Gastrocnemius medialis (tissue), 4 donors: ENCODE measurements at regions of chr2 and their contacts with region 1.

Region 1: GRCh38 chr2:237072067-237072931 is 13.4 kb upstream of the COPS8 start:
- DNase-seq: peak in 1 of 2 donors; percentile 53
- ATAC-seq: peak; percentile 60 to 71
- H3K4me3 ChIP-seq: no peak overlapping the region
- H3K27ac ChIP-seq: no peak overlapping the region
- H3K4me1 ChIP-seq: no peaks in the 10 kb centered on the region
- H3K27me3 ChIP-seq: no peaks in the 10 kb centered on the region
- CTCF ChIP-seq: peak; percentile 86 to 98 (median 91)
- POLR2A ChIP-seq: no peak

Region 2: GRCh38 chr2:235766278-235766677 is 1306.0 kb before region 1 on chr2:
- in situ Hi-C with region 1: loop called in 2 of 4 experiments (anchors 25 kb)
- intact Hi-C with region 1: loop called (anchors 10 kb)
- DNase-seq: peak; percentile 33 to 45
- ATAC-seq: peak; percentile 81 to 95
- H3K4me3 ChIP-seq: no peak overlapping the region
- H3K27ac ChIP-seq: no peak overlapping the region
- H3K4me1 ChIP-seq: no peaks in the 10 kb centered on the region
- H3K27me3 ChIP-seq: no peaks in the 10 kb centered on the region
- CTCF ChIP-seq: peak; percentile 77 to 92 (median 85)
- POLR2A ChIP-seq: no peak

Region 3: DNA sequence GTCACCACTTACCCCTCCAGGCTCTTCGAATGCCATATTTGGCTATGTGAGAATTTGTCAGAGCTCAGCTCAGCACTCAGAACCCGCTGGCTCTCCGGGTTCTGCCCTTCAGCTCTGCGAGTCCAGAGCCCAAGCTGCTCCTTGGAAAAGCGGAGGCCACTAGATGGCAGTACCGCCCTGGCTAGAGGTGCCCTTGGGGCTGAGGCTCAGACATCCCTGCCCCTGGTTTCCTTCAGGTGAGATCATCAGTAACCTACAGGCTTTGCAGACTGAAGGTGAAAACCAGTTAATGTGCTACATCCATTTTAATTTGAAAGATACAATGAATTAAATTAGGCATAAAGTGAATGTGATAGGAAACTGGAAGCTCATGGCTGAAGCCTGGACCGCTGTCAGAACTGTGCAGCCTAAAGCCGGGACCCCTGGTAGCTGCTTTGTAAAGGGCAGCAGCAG is 1292.8 kb before region 1 on chr2:
- in situ Hi-C with region 1: loop called (anchors 25 kb)
- intact Hi-C with region 1: no loop called
- DNase-seq: peak; percentile 17 to 45
- ATAC-seq: peak; percentile 47 to 66
- H3K4me3 ChIP-seq: no peak overlapping the region
- H3K27ac ChIP-seq: no peak overlapping the region
- H3K4me1 ChIP-seq: no peaks in the 10 kb centered on the region
- H3K27me3 ChIP-seq: no peaks in the 10 kb centered on the region
- CTCF ChIP-seq: peak; percentile 40 to 76 (median 62)
- POLR2A ChIP-seq: no peak

Region 4: DNA sequence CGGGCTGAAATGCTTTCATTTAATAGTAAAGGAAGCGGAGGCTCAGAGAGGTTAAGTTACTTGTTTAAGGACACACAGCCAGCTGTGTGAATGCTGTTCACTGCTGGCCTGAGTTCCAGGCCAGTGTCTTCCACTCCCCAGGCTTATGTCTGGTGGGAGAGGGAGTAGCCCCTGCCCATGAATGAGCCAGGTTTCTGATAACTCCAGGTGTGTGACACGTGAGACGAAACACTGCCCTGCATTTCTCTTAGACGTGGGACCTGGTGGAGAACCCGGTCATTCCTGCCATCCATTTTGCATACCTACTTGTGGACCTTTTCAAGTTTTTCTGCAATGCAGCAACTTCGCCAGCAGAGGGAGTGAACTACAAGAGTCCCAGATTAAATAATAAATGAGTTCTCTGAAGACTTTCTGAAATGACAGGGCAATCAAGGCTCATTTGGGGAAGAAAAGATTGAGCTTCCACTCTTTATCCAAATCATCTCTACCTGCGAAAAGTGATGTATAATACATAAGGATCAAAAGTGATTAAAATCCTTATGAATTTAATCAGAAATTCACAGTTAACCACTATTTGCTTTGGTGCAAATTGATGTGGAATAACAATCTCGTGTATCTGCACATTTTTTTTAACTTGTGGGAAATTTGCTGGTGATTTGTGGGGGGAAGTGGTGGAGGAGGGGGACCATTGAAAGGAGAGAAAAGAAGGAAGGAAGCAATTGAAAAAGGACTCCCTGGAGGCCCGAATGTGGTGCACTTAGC is 728.7 kb before region 1 on chr2:
- in situ Hi-C with region 1: loop called in 3 of 4 experiments (anchors 5 to 10 kb)
- intact Hi-C with region 1: no loop called
- DNase-seq: peak in 1 of 2 donors; percentile 47
- ATAC-seq: no peak
- H3K4me3 ChIP-seq: no peak overlapping the region
- H3K27ac ChIP-seq: no peak overlapping the region
- H3K4me1 ChIP-seq: no peaks in the 10 kb centered on the region
- H3K27me3 ChIP-seq: no peaks in the 10 kb centered on the region
- CTCF ChIP-seq: peak; percentile 47 to 78 (median 60)
- POLR2A ChIP-seq: no peak

Region 5: GRCh38 chr2:236352761-236353593 is 719.3 kb before region 1 on chr2:
- in situ Hi-C with region 1: loop called in 3 of 4 experiments (anchors 5 to 10 kb)
- intact Hi-C with region 1: loop called (anchors 1 kb)
- DNase-seq: no peak
- ATAC-seq: no peak
- H3K4me3 ChIP-seq: no peak overlapping the region
- H3K27ac ChIP-seq: no peak overlapping the region
- H3K4me1 ChIP-seq: no peaks in the 10 kb centered on the region
- H3K27me3 ChIP-seq: no peaks in the 10 kb centered on the region
- CTCF ChIP-seq: peak; percentile 66 to 85 (median 74)
- POLR2A ChIP-seq: no peak

Region 6: DNA sequence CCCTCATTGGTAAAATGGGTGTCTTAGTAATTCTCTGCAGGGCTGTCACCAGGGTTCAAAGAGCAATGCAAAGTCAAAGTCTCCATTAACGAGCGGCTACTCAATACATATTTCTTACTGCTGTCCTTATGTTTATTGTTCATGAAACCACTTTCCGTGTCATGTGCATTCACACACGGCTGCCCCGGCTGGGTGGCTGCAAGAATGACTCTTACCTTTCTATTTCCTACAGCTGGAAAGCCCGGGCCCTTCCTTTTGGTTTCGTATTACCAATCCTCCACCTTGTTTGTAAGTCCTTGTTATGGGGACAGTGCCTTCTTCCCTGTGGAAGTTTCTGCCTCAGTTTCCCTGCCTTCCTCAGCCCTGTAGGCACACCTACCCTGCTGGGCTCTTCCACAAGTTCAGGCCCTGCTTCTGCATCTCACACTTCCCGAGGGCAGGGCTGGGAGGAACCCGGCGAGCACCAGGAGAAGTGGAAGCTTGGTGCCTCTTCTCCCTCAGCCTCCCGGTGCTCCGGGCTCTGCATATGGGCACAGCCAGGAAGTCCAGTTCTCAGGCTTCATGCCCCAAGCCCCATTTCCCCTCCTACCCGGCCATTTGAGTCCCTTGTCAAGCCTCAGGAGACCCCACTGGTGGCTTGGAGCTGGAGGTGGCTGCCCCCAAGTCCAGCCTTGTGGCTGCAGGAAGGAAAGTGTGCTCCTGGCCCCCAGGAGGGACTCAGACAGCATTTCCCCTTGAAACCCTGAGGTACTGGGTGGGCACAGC is 521.4 kb before region 1 on chr2:
- in situ Hi-C with region 1: no loop called
- intact Hi-C with region 1: no loop called
- DNase-seq: no peak
- ATAC-seq: no peak
- H3K4me3 ChIP-seq: no peak overlapping the region
- H3K27ac ChIP-seq: no peak overlapping the region
- H3K4me1 ChIP-seq: no peaks in the 10 kb centered on the region
- H3K27me3 ChIP-seq: no peaks in the 10 kb centered on the region
- CTCF ChIP-seq: no peak
- POLR2A ChIP-seq: no peak